Activated naive CD8-positive, alpha-beta T cell treated with anti-CD3 and anti-CD28 coated beads, Interleukin-2, amount 10 ng/mL, durations not matched to agents 7 days and 5 days (primary cell): ENCODE measurements at regions of chr3 and their contacts with region 1.

Region 1: DNA sequence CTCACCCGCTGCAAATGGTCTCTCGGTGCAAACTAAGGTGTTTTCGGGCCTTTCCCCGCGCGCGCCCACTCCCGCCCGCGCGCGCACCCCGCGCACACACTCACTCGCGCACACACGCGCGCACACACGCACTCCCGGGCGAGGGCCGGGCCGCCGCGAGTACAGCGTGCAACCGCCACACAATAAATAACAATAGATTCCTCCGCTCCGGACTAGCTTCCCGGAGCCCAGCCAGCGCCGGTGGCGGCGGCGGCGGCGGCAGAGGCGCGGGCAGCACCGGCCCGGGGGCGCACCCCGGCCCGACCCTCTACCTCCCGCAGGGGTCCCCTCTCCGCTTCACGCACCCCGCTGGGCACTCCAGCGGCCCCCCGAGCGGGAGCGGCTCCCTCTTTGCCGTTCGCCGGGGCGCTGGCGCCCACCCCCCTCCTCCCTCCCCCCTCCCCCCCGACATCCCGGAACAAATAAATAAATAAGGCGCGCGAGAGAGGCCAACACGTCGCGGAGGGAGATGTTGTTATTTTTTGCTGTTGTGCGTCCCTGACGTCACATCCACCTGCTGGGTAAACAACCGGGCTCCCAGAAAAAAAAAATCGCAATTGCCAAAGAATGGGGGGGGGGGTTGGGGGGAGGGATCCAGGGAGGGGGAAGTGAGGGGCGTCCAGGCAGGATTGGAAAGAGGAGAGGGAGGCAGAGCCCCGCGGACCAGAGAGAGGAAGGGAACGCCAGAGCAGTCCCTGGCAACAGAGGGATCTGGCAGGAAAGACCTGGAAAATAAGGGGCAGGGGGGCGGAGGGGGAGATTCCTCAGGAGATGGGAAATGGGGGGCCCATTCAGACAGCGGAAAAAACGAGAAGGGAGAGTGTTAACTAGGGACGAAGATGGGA is at the start of gene FOXP1:
- DNase-seq: peak; percentile 78
- ATAC-seq: peak; percentile 48
- H3K4me3 Mint-ChIP-seq: peak within 1 kb of the TSS; percentile 98
- H3K27ac Mint-ChIP-seq: peak within 1 kb of the TSS; percentile 99
- H3K4me1 Mint-ChIP-seq: peaks cover 35% of the 10 kb centered on the region
- H3K27me3 Mint-ChIP-seq: no peaks in the 10 kb centered on the region
- total RNA-seq, gene FOXP1: 178 TPM

Region 2: GRCh38 chr3:71064288-71064955 is 519.4 kb before region 1 on chr3:
- POLR2A ChIA-PET with region 1: interaction called, 12 read pairs
- DNase-seq: peak; percentile 84
- ATAC-seq: peak; percentile 46
- H3K4me3 Mint-ChIP-seq: no peak overlapping the region
- H3K27ac Mint-ChIP-seq: no peak overlapping the region
- H3K4me1 Mint-ChIP-seq: peaks cover 49% of the 10 kb centered on the region
- H3K27me3 Mint-ChIP-seq: no peaks in the 10 kb centered on the region

Region 3: DNA sequence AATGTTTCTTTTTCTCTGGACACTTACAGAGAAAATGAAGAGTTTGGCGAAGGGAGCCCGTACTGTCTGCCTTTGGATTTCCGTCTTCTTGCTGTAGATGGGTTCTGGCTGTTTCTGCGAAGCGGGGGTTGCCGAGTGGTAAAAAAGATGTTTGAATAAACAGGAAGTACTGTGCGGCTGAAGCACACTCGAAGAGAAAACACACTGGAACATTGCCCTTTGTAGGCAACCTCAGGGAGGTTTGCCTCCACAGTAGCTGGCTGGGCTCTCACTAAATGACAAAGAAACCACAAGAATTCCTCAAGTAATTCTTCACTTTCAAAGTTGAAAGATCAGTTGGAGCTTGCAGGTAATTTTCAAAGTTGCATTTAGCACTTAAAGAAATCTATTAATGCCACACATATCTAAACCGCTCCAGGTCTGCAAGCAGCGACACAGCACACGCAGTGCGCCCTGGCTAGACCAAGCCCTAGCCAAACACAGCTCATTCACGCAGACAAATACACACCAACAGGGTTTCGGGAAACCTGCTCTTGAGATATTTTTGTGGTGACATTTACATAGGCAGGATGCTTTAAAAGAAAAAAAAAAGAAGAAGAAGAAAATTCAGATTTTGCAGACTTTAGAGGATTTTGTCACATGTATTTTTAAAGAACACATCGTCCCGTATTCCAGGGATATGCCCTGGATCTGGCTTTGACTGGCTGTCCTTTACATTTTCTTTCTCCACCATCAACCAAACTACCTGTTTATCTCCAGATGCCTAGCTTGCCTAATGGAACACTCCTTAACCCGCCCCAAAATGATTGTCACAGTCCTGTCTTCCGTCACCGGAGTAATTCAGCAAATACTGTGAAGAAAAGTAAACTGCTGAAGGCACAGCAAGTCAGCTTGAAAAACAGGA is 453.1 kb before region 1 on chr3:
- POLR2A ChIA-PET with region 1: interaction called, 11 read pairs
- DNase-seq: peak; percentile 60
- ATAC-seq: peak; percentile 75
- H3K4me3 Mint-ChIP-seq: peak overlapping the region; percentile 86
- H3K27ac Mint-ChIP-seq: peak overlapping the region; percentile 95
- H3K4me1 Mint-ChIP-seq: peaks cover 50% of the 10 kb centered on the region
- H3K27me3 Mint-ChIP-seq: no peaks in the 10 kb centered on the region

Region 4: GRCh38 chr3:71416876-71417275 is 166.9 kb before region 1 on chr3:
- POLR2A ChIA-PET with region 1: interaction called, 12 read pairs
- DNase-seq: peak; percentile 57
- ATAC-seq: peak; percentile 79
- H3K4me3 Mint-ChIP-seq: peak overlapping the region; percentile 80
- H3K27ac Mint-ChIP-seq: peak overlapping the region; percentile 93
- H3K4me1 Mint-ChIP-seq: peaks cover 65% of the 10 kb centered on the region
- H3K27me3 Mint-ChIP-seq: no peaks in the 10 kb centered on the region

Region 5: GRCh38 chr3:71456156-71456555 is 127.7 kb before region 1 on chr3:
- POLR2A ChIA-PET with region 1: interaction called, 21 read pairs
- DNase-seq: no peak
- ATAC-seq: peak; percentile 21
- H3K4me3 Mint-ChIP-seq: peak overlapping the region; percentile 79
- H3K27ac Mint-ChIP-seq: peak overlapping the region; percentile 95
- H3K4me1 Mint-ChIP-seq: peaks cover 72% of the 10 kb centered on the region
- H3K27me3 Mint-ChIP-seq: no peaks in the 10 kb centered on the region

Region 6: DNA sequence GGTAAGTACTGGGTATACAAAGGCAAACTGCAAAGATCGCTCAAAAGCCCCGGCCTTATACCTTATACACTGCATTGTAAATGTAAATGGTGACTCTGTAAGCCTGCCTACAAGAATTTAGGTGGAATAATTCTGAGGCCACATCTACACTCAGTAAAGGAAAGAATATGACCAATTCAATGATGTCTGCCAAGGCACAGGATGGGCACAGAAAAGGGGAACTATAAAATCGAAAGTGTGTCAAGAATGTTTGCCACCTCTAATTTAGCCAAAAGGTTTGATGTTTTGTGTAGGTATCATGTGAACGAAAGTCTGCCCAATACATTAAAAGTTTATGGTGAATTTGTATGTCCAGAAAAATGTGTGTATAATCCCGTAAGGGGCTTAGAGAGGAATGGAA is 96.4 kb before region 1 on chr3:
- POLR2A ChIA-PET with region 1: interaction called, 10 read pairs
- DNase-seq: no peak
- ATAC-seq: peak; percentile 12
- H3K4me3 Mint-ChIP-seq: peak overlapping the region; percentile 77
- H3K27ac Mint-ChIP-seq: peak overlapping the region; percentile 92
- H3K4me1 Mint-ChIP-seq: peaks cover 74% of the 10 kb centered on the region
- H3K27me3 Mint-ChIP-seq: no peaks in the 10 kb centered on the region